ENCODE measurements at regions of chr1 and their contacts with region 1.

Region 1: GRCh38 chr1:244214009-244214967 is 163.2 kb downstream of the ZBTB18 start:
- DNase-seq: peak; percentile 79 to 84
- ATAC-seq: peak; percentile 90 to 96
- H3K4me3 ChIP-seq: peak overlapping the region in 2 of 4 donors; percentile 31 to 36
- H3K27ac ChIP-seq: peak overlapping the region; percentile 73 to 86 (median 77)
- H3K4me1 ChIP-seq: peaks cover 29 to 42% of the 10 kb centered on the region in 2 donors
- H3K27me3 ChIP-seq: no peaks in the 10 kb centered on the region
- CTCF ChIP-seq: no peak
- POLR2A ChIP-seq: peak in 1 of 2 donors; percentile 45

Region 2: DNA sequence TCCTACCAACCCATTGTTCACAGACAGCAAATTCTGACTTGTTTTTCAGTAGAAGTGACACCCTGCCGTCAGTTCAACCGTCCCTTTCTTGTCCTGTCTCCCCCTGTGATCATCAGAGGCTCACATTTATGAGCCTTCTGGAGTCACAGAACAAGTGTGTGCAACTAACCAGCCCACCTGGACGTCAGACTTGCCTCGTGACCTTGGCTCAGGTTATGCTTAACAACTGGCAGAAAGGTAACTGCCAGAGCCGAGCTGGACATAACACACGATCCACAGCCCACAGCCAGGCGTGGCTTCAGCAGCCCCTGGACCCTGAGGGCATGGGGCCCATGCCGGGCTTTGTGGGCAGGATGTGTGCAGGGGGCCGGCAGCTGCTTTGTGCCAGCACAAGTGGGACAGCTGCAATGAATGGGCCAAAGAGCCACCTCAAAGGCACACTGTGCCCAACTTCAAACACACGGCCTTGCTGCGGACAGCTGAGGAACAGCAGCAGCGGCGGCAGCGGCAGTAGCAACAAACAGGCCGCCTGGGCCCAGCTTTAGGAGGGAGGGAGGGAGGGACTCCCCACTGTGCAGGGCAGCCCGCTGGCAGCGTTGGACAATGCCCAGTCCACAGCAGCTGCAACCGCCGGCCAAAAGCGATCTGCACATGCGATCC is 59.3 kb before region 1 on chr1:
- in situ Hi-C with region 1: no loop called
- intact Hi-C with region 1: loop called (anchors 5 kb)
- DNase-seq: peak; percentile 56 to 84
- ATAC-seq: peak; percentile 96
- H3K4me3 ChIP-seq: peak overlapping the region; percentile 29 to 39 (median 35)
- H3K27ac ChIP-seq: peak overlapping the region; percentile 76 to 86 (median 78)
- H3K4me1 ChIP-seq: peaks cover 7 to 8% of the 10 kb centered on the region in 2 donors
- H3K27me3 ChIP-seq: no peaks in the 10 kb centered on the region
- CTCF ChIP-seq: peak in 4 of 5 experiments; percentile 22 to 44 (median 31)
- POLR2A ChIP-seq: peak; percentile 56 to 71

Region 3: DNA sequence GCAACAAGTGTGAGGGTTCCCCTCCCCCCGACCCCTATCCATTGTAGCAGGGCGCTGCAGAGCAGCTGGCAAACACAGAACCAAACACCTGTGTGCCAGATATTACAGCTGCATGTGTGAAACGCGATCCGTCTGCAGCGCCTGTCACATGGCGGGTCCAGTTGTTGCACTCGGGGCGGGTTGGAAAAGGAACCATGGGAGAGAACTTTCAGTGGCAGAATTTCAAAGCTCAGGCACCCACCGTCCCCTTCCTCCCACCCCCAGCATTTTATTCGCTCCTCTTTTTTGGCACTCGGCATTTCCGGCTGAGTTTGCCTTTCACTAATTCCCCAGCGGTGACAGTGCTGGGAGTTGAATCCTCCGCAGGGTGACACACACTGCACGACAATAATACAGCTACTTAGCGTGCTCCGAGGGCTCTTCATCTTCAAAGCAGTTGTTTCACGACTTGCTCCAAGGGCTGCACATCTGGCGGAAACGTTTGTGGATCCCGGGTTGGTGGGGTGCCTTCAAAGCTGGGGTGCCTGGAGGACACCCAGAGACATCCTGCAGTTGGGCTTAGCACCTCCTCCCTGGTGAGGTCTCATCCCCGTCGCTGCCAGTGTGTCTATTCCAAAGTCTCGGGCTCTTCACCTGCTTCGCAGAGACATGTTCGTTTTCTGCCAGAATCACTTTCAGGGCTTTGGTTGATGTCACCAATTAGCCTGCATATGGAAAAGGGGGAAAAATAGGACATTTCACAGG is 17.5 kb after region 1 on chr1:
- in situ Hi-C with region 1: no loop called
- intact Hi-C with region 1: loop called (anchors 1 kb)
- DNase-seq: peak; percentile 85 to 93
- ATAC-seq: peak; percentile 84 to 89
- H3K4me3 ChIP-seq: peak overlapping the region; percentile 38 to 56 (median 52)
- H3K27ac ChIP-seq: peak overlapping the region; percentile 85 to 94 (median 92)
- H3K4me1 ChIP-seq: peaks cover 15 to 23% of the 10 kb centered on the region in 2 donors
- H3K27me3 ChIP-seq: no peaks in the 10 kb centered on the region
- CTCF ChIP-seq: no peak
- POLR2A ChIP-seq: peak in 1 of 2 donors; percentile 30

Region 4: GRCh38 chr1:244536316-244536715 is 322.0 kb after region 1 on chr1:
- in situ Hi-C with region 1: no loop called
- intact Hi-C with region 1: no loop called
- DNase-seq: no peak
- ATAC-seq: no peak
- H3K4me3 ChIP-seq: no peak overlapping the region
- H3K27ac ChIP-seq: no peak overlapping the region
- H3K4me1 ChIP-seq: no peaks in the 10 kb centered on the region
- H3K27me3 ChIP-seq: no peaks in the 10 kb centered on the region
- CTCF ChIP-seq: no peak
- POLR2A ChIP-seq: no peak

Measured in gastrocnemius medialis (tissue), 4 donors.